Ascending aorta (tissue), 2 donors: ENCODE measurements at regions of chr9 and their contacts with region 1.

Region 1: GRCh38 chr9:14768405-14769229 is 46.1 kb upstream of the CER1 start:
- DNase-seq: no peak
- H3K4me3 ChIP-seq: peak overlapping the region in 1 of 2 donors; percentile 16
- H3K27ac ChIP-seq: no peak overlapping the region
- H3K4me1 ChIP-seq: no peaks in the 10 kb centered on the region
- H3K27me3 ChIP-seq: no peaks in the 10 kb centered on the region
- CTCF ChIP-seq: peak; percentile 43 to 82 (median 64)

Region 2: DNA sequence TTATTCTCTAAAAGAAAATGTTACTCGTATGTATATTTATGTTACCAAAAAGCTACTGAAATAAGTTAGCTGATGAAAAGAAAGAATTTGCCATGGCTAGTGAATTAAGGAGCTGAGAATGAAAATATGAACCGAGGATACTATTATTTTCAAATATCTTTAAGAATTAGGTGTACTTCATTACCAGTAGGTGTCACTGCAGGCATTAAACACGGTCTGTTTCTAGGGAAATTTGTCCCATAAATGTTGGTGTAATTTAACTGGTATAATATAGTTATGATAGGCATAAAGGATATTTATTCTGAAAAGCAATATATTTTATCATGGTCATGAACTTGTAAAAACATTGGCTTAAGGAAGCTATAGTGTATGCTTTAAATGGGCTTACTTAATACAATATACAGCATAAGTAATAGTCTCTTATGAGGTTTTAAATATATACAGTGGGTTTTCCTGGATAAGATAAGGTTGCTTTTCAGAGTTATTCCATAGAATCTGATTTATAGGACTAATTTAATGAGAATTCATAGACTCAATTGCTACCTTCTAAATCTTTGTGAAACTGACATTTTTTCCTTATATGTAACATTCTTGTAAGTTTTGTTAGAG is 1416.7 kb before region 1 on chr9:
- intact Hi-C with region 1: loop called (anchors 10 kb)
- DNase-seq: no peak
- H3K4me3 ChIP-seq: no peak overlapping the region
- H3K27ac ChIP-seq: no peak overlapping the region
- H3K4me1 ChIP-seq: no peaks in the 10 kb centered on the region
- H3K27me3 ChIP-seq: no peaks in the 10 kb centered on the region
- CTCF ChIP-seq: peak; percentile 36 to 62 (median 45)

Region 3: DNA sequence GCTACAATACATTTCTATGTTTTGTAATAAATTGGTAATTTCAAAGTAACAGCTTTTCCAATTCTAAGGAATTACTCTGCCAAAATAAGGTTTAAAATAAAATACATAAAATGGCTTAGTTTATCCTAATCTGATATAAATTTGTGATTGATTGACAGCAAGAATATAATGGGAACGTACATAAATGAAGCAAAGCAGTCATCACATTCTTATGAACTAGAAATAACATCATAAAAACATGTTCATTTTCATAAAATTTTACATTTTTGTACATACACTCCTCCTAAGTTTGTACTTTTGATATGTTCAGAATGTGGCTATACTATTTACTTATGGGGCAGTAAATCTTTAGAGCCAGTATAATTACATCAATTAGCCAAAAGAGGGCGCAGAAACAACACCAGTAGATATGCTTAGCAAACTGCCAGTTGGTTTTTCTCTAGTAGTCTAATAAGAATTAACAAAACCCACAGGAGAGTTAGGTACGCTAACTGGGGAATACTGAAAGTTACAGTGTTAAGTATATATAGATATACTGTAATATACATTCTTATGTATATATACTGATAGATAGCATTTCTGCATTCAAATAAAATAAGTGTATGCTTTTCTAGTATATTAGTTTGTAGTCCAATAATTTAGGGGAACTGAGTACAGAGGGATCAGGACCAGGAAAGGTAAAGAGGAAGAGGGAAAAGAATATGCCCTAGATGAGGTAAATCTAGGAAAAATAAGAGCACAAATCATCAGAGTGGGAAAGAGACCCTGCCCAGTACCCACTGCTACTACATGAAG is 152.2 kb before region 1 on chr9:
- intact Hi-C with region 1: loop called (anchors 2 kb)
- DNase-seq: no peak
- H3K4me3 ChIP-seq: no peak overlapping the region
- H3K27ac ChIP-seq: no peak overlapping the region
- H3K4me1 ChIP-seq: no peaks in the 10 kb centered on the region
- H3K27me3 ChIP-seq: no peaks in the 10 kb centered on the region
- CTCF ChIP-seq: peak in 2 of 3 experiments; percentile 41 to 57

Region 4: DNA sequence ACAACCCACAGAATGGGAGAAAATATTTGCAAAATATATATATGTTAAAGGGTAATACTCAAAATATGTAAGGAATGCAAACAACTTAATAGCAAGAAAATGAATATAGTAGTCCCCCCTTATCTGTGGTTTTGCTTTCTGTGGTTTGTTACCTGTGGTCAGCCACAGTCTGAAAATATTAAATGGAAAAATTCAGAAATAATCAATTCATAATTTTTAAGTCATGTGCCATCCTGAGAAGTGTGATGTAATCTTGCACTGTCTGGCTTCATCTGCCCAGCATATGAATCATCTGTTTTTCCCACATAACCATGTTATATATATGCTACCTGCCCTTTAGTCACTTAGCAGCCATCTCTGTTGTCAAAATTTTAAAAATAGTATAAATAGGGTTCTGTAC is 57.8 kb before region 1 on chr9:
- intact Hi-C with region 1: no loop called
- DNase-seq: no peak
- H3K4me3 ChIP-seq: no peak overlapping the region
- H3K27ac ChIP-seq: no peak overlapping the region
- H3K4me1 ChIP-seq: no peaks in the 10 kb centered on the region
- H3K27me3 ChIP-seq: no peaks in the 10 kb centered on the region
- CTCF ChIP-seq: no peak

Region 5: DNA sequence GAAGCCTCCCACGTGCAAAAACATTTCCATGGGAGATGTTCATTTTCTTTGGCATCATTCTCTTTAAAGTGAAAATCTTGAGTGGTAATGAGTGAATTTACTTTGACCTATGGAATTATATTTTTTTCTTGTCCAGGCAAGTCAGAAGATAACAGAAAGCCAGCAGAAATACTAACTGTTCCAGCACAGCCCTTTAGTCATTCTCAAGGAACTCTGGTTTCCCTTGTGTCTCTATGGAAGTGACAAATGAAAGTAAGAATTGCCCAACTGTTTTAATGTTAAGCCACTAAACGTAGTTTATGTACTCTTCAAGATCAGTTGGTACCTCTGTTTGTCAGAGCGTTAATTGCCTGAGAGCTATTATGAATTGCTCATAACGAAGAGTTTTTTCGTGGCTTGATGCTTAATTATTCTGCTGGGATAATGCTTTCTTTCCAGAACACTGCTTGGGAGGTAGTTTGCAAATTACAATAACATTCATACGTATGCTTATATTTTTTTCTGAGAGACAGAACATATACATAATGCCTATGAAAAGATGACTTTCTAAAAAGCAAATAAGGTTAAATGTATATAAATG is 38.4 kb after region 1 on chr9:
- intact Hi-C with region 1: no loop called
- DNase-seq: no peak
- H3K4me3 ChIP-seq: no peak overlapping the region
- H3K27ac ChIP-seq: no peak overlapping the region
- H3K4me1 ChIP-seq: no peaks in the 10 kb centered on the region
- H3K27me3 ChIP-seq: no peaks in the 10 kb centered on the region
- CTCF ChIP-seq: no peak

Region 6: DNA sequence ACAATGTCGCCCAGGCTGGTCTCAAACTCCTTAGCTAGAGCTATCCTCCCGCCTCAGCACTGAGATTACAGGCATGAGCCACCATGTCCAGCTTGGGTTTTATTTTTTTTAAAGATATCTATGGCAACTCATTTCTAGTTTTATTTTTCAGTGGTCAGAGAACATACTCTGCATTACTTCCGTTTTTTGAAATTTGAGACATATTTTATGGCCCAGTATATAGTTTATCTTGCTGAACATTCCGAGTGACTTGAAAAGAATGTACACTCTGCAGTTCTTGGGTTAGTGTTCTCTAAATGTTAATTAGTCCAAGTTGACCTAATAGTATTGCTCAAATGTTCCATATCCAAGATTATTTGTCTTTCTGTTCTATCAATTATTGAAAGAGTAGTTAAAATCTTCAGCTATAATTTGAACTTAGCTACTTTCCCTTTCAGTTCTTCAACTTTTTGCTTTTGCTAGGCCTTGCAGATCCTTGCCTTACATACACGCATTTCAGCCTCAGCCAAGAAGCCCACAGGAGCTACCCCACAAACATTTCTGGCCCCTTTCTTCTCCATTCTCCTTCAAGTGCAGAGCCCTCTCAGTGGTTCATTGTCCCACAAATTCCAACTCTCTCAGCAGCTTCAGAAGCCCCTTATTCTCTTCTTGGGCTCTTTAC is 631.8 kb after region 1 on chr9:
- intact Hi-C with region 1: no loop called
- DNase-seq: no peak
- H3K4me3 ChIP-seq: no peak overlapping the region
- H3K27ac ChIP-seq: peak overlapping the region; percentile 64 to 78
- H3K4me1 ChIP-seq: peaks cover 3 to 17% of the 10 kb centered on the region in 2 donors
- H3K27me3 ChIP-seq: no peaks in the 10 kb centered on the region
- CTCF ChIP-seq: no peak